ENCODE measurements at regions of chr10 and their contacts with region 1.

Region 1: DNA sequence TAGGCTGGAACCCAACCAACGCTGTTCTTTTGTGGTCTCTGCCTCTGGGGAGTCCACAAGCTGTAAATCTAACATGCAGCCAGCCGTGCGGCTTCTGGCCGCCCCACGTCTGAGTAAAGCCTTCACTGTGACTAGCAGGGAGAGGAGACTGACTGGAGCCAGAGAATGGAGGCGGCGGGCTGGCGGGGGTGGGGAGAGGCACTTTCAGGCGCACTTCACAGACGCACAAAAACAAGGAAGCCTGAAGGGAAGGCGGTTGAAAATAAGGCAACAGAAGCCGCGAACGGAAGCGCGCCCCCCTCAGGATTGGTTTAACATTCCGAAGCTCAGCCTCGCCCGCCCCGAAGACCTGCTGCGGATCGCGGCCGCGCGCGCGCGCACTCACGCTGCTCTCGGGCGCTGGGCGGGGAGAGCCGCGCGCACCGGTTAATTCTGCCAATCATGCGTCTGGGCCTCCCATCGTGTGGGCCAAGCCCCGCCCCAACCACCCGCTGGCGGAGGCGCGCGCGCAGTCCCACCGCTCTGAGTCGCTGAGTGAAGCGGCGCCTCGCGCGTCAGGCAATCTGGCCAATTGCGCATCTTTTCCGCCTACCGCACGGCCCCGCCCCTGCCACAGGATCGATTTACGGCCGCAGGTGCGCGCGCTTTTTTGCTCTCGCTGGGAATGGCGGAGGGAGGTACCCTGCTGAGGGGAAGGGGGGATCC is at the start of gene SFR1:
- DNase-seq: peak; percentile 97
- ATAC-seq: peak; percentile 98
- H3K4me3 ChIP-seq: peak within 1 kb of the TSS; percentile 85
- H3K27ac ChIP-seq: peak within 1 kb of the TSS; percentile 93
- H3K4me1 ChIP-seq: no peaks in the 10 kb centered on the region; the same call in 1 of the 2 replicates
- H3K27me3 ChIP-seq: no peaks in the 10 kb centered on the region
- CTCF ChIP-seq: peak; percentile 82
- POLR2A ChIP-seq: peak; percentile 93
- RAD21 ChIP-seq: peak; percentile 56
- total RNA-seq, gene SFR1: 1.6 and 5.6 TPM in 2 replicates

Region 2: GRCh38 chr10:103367379-103367781 is 754.3 kb before region 1 on chr10:
- CTCF ChIA-PET with region 1: no interaction called
- POLR2A ChIA-PET with region 1: no interaction called
- dilution Hi-C with region 1: no loop called
- in situ Hi-C with region 1: no loop called
- intact Hi-C with region 1: no loop called
- DNase-seq: no peak
- ATAC-seq: no peak
- H3K4me3 ChIP-seq: peak overlapping the region; percentile 88
- H3K27ac ChIP-seq: no peak overlapping the region
- H3K4me1 ChIP-seq: no peaks in the 10 kb centered on the region
- H3K27me3 ChIP-seq: no peaks in the 10 kb centered on the region
- CTCF ChIP-seq: no peak
- POLR2A ChIP-seq: no peak
- RAD21 ChIP-seq: no peak

Region 3: GRCh38 chr10:104209575-104210198 is 88.0 kb after region 1 on chr10:
- CTCF ChIA-PET with region 1: no interaction called
- POLR2A ChIA-PET with region 1: no interaction called
- dilution Hi-C with region 1: no loop called
- in situ Hi-C with region 1: no loop called
- intact Hi-C with region 1: loop called (anchors 5 kb)
- DNase-seq: peak; percentile 39
- ATAC-seq: peak; percentile 79
- H3K4me3 ChIP-seq: no peak overlapping the region
- H3K27ac ChIP-seq: no peak overlapping the region
- H3K4me1 ChIP-seq: no peaks in the 10 kb centered on the region
- H3K27me3 ChIP-seq: peaks cover 29% of the 10 kb centered on the region
- CTCF ChIP-seq: peak; percentile 64
- POLR2A ChIP-seq: no peak
- RAD21 ChIP-seq: peak; percentile 68

Region 4: DNA sequence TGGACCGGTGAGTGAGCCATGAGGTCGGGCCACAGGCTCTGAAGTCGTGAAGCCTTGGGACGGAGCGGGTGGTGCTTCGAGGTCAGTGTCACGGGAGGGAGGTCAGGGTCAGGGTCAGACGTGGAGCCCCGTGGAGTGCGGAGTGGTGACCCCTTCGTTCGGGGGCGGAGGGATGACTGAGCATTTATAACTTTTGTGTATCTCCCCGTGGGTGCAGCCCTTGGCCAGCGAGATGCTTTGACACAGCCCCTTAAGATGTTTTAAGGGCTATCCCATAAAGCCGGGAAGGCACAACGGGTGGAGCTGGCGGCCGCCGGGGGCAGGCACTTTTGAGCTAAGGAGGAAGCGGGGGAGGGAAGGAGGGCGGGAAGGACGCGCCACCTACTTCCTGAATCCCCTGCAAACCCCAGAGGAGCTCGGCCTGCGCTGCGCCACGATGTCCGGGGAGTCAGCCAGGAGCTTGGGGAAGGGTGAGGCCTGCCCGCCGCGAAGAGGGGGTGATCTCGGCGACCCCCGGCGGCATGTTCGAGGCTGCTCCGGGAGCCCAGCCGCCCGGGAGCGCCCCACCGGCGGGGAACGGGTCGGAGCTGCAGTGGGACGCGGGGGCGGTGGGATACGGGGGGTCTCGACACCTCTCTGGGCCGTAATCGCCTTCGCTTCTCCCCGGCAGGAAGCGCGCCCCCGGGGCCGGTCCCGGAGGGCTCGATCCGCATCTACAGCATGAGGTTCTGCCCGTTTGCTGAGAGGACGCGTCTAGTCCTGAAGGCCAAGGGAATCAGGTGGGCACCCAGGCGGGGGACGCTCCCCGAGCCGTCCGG is 133.0 kb after region 1 on chr10 and contains the start of gene GSTO1:
- CTCF ChIA-PET with region 1: interaction called, 3 read pairs
- POLR2A ChIA-PET with region 1: no interaction called
- dilution Hi-C with region 1: no loop called
- in situ Hi-C with region 1: no loop called
- intact Hi-C with region 1: loop called (anchors 1 kb)
- DNase-seq: peak; percentile 76
- ATAC-seq: peak; percentile 89
- H3K4me3 ChIP-seq: peak within 1 kb of the TSS; percentile 96
- H3K27ac ChIP-seq: peak within 1 kb of the TSS; percentile 96
- H3K4me1 ChIP-seq: peaks cover 8% of the 10 kb centered on the region
- H3K27me3 ChIP-seq: no peaks in the 10 kb centered on the region
- CTCF ChIP-seq: no peak
- POLR2A ChIP-seq: peak; percentile 76
- RAD21 ChIP-seq: no peak
- total RNA-seq, gene GSTO1: 258 and 330 TPM in 2 replicates

Region 5: GRCh38 chr10:104353325-104354048 is 231.8 kb after region 1 on chr10 and contains the start of gene CFAP58:
- CTCF ChIA-PET with region 1: no interaction called
- POLR2A ChIA-PET with region 1: no interaction called
- dilution Hi-C with region 1: no loop called
- in situ Hi-C with region 1: no loop called
- intact Hi-C with region 1: loop called (anchors 5 kb)
- DNase-seq: peak; percentile 70
- ATAC-seq: peak; percentile 87
- H3K4me3 ChIP-seq: peak within 1 kb of the TSS; percentile 53
- H3K27ac ChIP-seq: no peak within 1 kb of the TSS; the same call in 1 of the 2 replicates
- H3K4me1 ChIP-seq: peaks cover 7% of the 10 kb centered on the region; the same call in 1 of the 2 replicates
- H3K27me3 ChIP-seq: peaks cover 3% of the 10 kb centered on the region; the same call in 1 of the 2 replicates
- CTCF ChIP-seq: peak; percentile 67
- POLR2A ChIP-seq: no peak
- RAD21 ChIP-seq: no peak
- total RNA-seq, gene CFAP58: 0.36 and 0.83 TPM in 2 replicates

Measured in IMR-90 (cell line).